HEK293T (cell line): ENCODE measurements at regions of chr12 and their contacts with region 1.

Region 1: GRCh38 chr12:120469450-120470149 is at the start of gene SRSF9:
- DNase-seq: peak; percentile 97

Region 2: DNA sequence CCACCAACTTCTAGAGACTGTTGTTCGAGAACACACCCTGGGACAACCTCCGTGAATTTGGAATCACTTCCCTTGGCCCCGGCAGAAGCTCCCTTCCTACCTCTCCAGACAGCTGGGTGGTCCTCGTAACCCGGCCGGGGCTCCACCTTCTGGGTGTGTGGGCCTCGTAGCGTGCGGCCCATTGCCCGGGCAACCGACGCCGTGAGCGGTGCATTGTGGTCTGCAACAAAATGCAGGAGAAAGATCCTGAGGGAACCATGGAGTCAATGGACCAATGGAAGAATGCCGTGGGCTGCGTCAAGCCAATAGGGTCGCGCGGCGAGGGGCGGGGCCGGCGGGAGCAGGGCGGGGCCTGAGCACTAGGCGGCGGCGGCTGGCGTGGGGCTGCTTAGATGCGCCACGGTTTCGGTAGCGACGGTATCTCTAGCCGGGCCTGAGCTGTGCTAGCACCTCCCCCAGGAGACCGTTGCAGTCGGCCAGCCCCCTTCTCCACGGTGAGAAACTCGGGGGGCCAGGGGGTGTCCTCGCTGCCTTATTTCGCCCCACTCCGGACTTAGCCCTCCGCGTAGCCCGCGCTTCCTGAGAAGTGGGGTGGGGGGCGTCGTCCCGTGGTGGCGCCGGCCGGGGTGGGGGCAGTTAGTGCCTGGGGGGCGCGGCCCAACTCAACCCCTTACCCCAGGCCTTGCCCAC is 26.3 kb after region 1 on chr12 and contains the start of gene DYNLL1:
- CTCF ChIA-PET with region 1: interaction called, 6 read pairs
- POLR2A ChIA-PET with region 1: interaction called, 39 read pairs
- DNase-seq: peak; percentile 99

Region 3: DNA sequence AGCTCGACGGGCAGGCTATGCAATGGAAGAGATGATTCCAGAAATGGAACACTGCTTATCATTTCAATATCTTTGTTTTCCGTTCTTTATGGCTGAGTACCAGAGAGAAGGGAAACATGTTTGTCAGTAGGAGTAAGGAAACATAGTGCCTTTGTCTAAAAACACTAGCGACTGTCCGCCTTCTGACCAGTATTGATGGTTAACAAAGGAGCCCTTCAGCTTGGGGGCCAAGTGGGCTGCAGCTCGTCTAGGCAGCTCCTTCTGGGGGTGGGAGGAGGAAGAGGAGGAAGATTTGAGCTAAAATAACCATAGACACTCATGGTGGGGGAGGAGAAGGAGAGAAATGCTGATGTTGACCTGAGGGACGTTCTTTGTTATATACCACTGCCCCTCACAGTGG is 44.4 kb after region 1 on chr12:
- CTCF ChIA-PET with region 1: no interaction called
- POLR2A ChIA-PET with region 1: no interaction called
- DNase-seq: no peak

Region 4: GRCh38 chr12:120571299-120571698 is 101.7 kb after region 1 on chr12:
- CTCF ChIA-PET with region 1: no interaction called
- POLR2A ChIA-PET with region 1: no interaction called
- DNase-seq: no peak

Region 5: DNA sequence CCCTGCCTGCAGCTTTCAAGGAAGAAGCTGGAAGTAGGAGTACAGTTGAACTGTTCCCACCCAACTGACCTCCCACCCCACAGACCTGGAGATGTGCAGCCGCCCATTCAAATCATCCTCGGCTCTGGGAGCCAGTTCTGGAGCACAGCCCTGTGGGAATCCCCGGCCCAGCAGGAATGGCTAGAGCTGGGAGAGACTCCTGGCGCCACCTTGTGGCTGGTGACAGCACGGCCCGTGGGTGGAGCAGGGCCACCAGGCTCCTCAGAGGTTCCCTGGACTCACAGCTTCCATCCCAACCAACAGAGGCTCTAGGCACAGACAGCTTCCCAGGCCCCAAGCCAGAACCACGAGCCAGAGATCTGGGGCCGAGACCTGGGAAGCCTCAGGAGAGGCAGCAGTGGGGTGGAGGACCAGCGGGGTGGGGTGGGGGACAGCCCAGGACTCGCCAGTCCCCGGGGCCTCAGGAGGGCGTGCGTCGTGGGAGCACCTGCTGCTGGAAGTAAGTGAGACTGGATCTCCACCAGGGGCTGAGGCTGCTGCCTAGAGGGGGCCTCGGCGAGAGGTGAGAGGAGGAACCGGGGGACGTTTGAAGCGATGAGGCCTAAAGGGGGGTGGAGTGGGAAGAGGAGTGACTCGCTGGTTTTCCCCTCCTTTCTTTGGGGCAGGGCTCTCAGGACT is 973.7 kb after region 1 on chr12:
- CTCF ChIA-PET with region 1: interaction called, 13 read pairs
- POLR2A ChIA-PET with region 1: no interaction called
- DNase-seq: peak; percentile 94